ENCODE measurements at regions of chr11 and their contacts with region 1.

Region 1: DNA sequence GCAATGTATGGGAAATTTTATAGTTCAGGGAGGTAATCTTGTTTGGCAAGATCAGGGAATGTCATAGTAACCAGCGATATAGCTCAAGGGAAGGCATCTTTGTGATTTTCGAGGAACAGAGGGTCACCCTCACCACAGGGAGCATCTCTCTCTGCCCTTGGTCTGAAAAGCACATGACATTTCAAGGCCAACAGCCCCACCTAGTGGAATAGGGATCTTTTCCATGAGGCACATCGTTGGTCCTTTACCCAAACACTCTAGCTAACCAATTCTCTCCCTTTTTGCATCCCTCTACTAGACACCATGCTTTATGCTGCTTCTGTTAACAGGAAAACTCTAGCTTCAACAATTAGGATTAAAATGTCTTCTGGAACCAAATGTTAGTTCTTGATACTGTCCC is 179.0 kb downstream of the GRM5 start:
- DNase-seq: peak; percentile 22
- H3K4me3 ChIP-seq: no peak overlapping the region
- H3K27ac ChIP-seq: no peak overlapping the region
- H3K4me1 ChIP-seq: no peaks in the 10 kb centered on the region
- H3K27me3 ChIP-seq: no peaks in the 10 kb centered on the region
- CTCF ChIP-seq: 0 out of 2 replicates have a peak, but pooled peaks have one; percentile 29

Region 2: DNA sequence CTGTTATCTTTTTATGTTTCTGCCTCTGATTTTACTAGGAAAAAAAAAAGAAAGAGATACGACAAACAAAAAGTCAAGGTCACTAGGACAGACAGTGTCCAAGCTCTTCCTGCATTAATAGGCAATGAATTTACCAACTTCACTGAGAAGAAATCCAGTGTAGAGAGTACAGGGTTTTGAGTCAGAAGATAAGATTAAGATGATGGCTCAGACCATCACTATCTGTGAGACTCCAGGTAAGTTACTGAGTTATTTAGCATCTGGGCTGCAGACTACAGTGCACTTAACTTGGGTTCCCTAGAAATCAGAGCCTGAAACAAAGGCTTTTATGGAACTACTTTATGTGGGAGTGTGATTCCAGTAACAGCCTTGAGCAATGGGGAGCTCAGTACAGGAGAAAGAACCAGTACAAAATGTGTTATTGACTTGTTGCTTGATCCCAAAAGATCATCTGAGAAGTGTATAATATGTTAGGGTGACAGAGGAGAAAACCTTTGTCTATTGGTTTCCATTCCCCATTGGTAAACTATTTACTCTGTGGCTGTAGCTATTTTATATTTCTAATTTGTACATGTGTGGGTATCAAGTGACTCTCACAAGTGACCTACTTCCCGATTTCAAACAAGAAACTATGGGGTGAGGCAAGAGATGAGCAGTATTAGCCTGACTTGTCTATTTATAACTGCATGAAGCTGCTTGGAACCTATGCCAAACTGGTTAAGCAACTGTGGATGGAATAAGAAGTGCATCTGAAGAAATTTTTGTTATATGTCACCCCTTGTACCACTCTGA is 1107.3 kb before region 1 on chr11:
- CTCF ChIA-PET with region 1: no interaction called
- POLR2A ChIA-PET with region 1: no interaction called
- intact Hi-C with region 1: no loop called
- DNase-seq: no peak
- H3K4me3 ChIP-seq: no peak overlapping the region
- H3K27ac ChIP-seq: no peak overlapping the region
- H3K4me1 ChIP-seq: no peaks in the 10 kb centered on the region
- H3K27me3 ChIP-seq: peaks cover 6% of the 10 kb centered on the region
- CTCF ChIP-seq: no peak

Region 3: DNA sequence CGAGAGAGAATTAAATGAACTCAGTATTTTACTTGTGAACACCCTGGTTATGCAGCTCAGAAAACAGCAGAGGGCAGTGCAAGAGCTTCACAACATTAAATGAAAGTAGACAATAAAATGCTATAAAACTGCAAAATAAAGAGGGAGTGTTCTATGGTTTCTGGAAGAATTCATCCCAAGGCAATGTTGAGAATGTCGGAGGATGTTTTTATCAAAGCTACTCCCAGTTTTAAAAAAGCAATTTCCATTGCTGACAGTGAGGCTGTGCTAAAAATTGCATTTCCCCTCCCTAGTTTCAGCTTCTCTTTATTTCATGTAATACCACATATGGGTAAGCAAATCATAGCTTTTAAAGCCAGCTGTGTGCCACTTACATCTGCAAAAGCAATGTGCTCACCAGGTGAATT is 1008.4 kb before region 1 on chr11:
- CTCF ChIA-PET with region 1: no interaction called
- POLR2A ChIA-PET with region 1: no interaction called
- intact Hi-C with region 1: loop called (anchors 5 kb)
- DNase-seq: peak; percentile 58
- H3K4me3 ChIP-seq: no peak overlapping the region
- H3K27ac ChIP-seq: no peak overlapping the region
- H3K4me1 ChIP-seq: no peaks in the 10 kb centered on the region
- H3K27me3 ChIP-seq: peaks cover 9% of the 10 kb centered on the region
- CTCF ChIP-seq: peak; percentile 70

Region 4: DNA sequence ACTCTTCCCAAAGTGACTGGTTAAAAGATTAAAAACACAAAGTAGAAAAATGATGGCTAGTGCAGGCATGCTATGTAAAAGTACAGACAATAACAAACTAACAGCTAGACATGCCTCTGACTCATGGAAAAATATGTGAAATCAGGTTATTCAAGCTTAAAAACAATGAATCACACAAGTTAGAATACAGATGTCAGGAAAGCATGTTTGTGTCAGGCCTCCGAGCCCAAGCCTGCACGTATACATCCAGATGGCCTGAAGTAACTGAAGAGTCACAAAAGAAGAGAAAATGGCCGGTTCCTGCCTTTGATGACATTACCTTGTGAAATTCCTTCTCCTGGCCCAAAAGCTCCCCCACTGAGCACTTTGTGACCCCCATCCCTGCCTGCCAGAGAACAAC is 494.3 kb after region 1 on chr11:
- CTCF ChIA-PET with region 1: no interaction called
- POLR2A ChIA-PET with region 1: no interaction called
- intact Hi-C with region 1: no loop called
- DNase-seq: peak; percentile 4
- H3K4me3 ChIP-seq: no peak overlapping the region
- H3K27ac ChIP-seq: no peak overlapping the region
- H3K4me1 ChIP-seq: no peaks in the 10 kb centered on the region
- H3K27me3 ChIP-seq: no peaks in the 10 kb centered on the region
- CTCF ChIP-seq: no peak